CD4-positive, alpha-beta memory T cell (primary cell): ENCODE measurements at regions of chr21 and their contacts with region 1.

Region 1: DNA sequence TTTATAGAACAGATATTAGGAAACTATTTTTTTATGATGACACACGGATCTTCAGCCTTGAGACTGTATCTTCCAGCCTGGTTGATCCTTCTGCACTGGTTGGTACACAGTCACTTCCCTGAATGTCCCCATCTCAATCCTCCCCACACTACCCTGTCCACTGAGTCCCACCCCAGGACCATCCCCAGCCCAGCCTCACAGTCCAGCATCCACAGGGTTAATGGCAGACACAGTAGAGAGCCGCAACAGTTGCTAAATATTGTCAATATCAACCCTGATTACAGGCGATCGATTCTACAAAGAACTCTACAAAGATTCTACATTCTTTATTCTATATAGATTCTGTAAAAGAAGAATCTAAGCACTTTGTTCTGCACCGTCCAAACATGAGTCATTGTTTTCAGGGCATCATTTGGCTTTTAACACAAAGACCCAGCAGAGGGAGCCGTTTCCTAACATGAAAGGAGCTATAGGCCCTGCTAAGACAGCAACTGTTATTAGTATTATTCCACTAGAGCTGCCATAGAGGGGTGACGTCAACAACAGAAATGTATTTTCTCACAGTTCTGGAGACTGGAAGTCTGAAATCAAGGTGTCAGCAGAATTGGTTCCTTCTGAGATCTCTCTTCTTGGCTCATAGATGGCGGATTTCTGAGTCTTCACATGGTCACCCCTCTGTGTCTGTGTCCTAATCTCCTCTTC is 30.1 kb upstream of the IFNAR2 start:
- DNase-seq: peak; percentile 80 to 92 (median 84)
- H3K4me3 ChIP-seq: no peak overlapping the region
- H3K4me3 Mint-ChIP-seq: no peak overlapping the region
- H3K27ac ChIP-seq: no peak overlapping the region
- H3K27ac Mint-ChIP-seq: peak overlapping the region in 6 of 7 donors; percentile 65 to 88 (median 80)
- H3K4me1 ChIP-seq: peaks cover 18% of the 10 kb centered on the region
- H3K4me1 Mint-ChIP-seq: peaks cover 22 to 43% (median 32%) of the 10 kb centered on the region in 4 donors
- H3K27me3 ChIP-seq: no peaks in the 10 kb centered on the region
- H3K27me3 Mint-ChIP-seq: peaks cover 2 to 3% of the 10 kb centered on the region in 2 donors

Region 2: GRCh38 chr21:32834916-32835235 is 364.8 kb before region 1 on chr21:
- CTCF ChIA-PET with region 1: interaction called, 65 read pairs
- POLR2A ChIA-PET with region 1: no interaction called
- intact Hi-C with region 1: loop called (anchors 2 kb)
- DNase-seq: no peak
- H3K4me3 ChIP-seq: no peak overlapping the region
- H3K4me3 Mint-ChIP-seq: no peak overlapping the region
- H3K27ac ChIP-seq: no peak overlapping the region
- H3K27ac Mint-ChIP-seq: no peak overlapping the region
- H3K4me1 ChIP-seq: no peaks in the 10 kb centered on the region
- H3K4me1 Mint-ChIP-seq: no peaks in the 10 kb centered on the region
- H3K27me3 ChIP-seq: no peaks in the 10 kb centered on the region
- H3K27me3 Mint-ChIP-seq: peaks cover 2 to 3% of the 10 kb centered on the region in 2 donors

Region 3: GRCh38 chr21:32940079-32941014 is 259.3 kb before region 1 on chr21:
- CTCF ChIA-PET with region 1: interaction called, 113 read pairs
- POLR2A ChIA-PET with region 1: interaction called, 4 read pairs
- intact Hi-C with region 1: loop called (anchors 1 kb)
- DNase-seq: peak in 4 of 5 donors; percentile 46 to 55 (median 50)
- H3K4me3 ChIP-seq: no peak overlapping the region
- H3K4me3 Mint-ChIP-seq: peak overlapping the region in 1 of 8 donors; percentile 52
- H3K27ac ChIP-seq: no peak overlapping the region
- H3K27ac Mint-ChIP-seq: no peak overlapping the region
- H3K4me1 ChIP-seq: no peaks in the 10 kb centered on the region
- H3K4me1 Mint-ChIP-seq: peaks cover 0 to 6% (median 0%) of the 10 kb centered on the region in 4 donors
- H3K27me3 ChIP-seq: no peaks in the 10 kb centered on the region
- H3K27me3 Mint-ChIP-seq: peaks cover 2 to 8% of the 10 kb centered on the region in 2 donors

Region 4: GRCh38 chr21:33185852-33186251 is 13.8 kb before region 1 on chr21:
- CTCF ChIA-PET with region 1: interaction called, 35 read pairs
- POLR2A ChIA-PET with region 1: interaction called, 7 read pairs
- intact Hi-C with region 1: no loop called
- DNase-seq: peak; percentile 42 to 70 (median 56)
- H3K4me3 ChIP-seq: no peak overlapping the region
- H3K4me3 Mint-ChIP-seq: peak overlapping the region; percentile 18 to 82 (median 71)
- H3K27ac ChIP-seq: peak overlapping the region; percentile 11
- H3K27ac Mint-ChIP-seq: peak overlapping the region; percentile 76 to 93 (median 88)
- H3K4me1 ChIP-seq: peaks cover 38% of the 10 kb centered on the region
- H3K4me1 Mint-ChIP-seq: peaks cover 26 to 47% (median 30%) of the 10 kb centered on the region in 4 donors
- H3K27me3 ChIP-seq: no peaks in the 10 kb centered on the region
- H3K27me3 Mint-ChIP-seq: peaks cover 0 to 1% of the 10 kb centered on the region in 2 donors

Region 5: DNA sequence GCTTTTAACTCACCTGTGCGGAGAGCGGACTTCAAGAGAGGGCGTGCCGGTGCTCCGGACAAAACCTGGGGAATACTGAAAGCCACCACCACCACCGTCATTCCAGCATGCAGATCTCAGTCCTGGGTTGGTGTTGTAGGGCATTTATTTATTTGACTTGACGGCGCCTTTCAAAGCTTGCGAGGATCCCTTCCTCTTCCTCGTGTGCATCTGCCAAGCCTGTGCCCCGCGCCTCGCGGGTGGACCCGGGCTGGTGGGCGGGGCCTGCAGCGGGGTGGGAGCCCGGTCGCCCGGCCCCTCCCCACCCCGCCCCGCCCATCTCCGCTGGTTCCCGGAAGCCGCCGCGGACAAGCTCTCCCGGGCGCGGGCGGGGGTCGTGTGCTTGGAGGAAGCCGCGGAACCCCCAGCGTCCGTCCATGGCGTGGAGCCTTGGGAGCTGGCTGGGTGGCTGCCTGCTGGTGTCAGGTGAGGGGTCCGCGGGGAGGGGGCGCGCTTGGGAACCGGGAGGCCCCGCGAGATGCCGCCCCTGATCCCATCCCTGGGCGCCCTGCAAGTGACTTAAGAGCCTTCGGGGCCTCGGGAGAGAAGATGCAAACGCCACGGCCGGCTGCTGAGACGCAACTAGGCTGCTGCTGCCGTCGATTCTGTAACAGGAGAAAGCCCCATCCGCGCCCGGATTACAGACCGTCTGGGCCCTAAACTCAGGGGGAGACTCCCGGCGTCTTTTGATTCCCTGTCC is 66.6 kb after region 1 on chr21 and contains the start of gene IL10RB:
- CTCF ChIA-PET with region 1: interaction called, 10 read pairs
- POLR2A ChIA-PET with region 1: interaction called, 11 read pairs
- intact Hi-C with region 1: loop called (anchors 1 kb)
- DNase-seq: peak; percentile 61 to 77 (median 68)
- H3K4me3 ChIP-seq: peak within 1 kb of the TSS; percentile 54 to 79
- H3K4me3 Mint-ChIP-seq: peak within 1 kb of the TSS; percentile 93 to 99 (median 96)
- H3K27ac ChIP-seq: peak within 1 kb of the TSS; percentile 80
- H3K27ac Mint-ChIP-seq: peak within 1 kb of the TSS; percentile 92 to 97 (median 95)
- H3K4me1 ChIP-seq: peaks cover 59% of the 10 kb centered on the region
- H3K4me1 Mint-ChIP-seq: peaks cover 38 to 74% (median 50%) of the 10 kb centered on the region in 4 donors
- H3K27me3 ChIP-seq: no peaks in the 10 kb centered on the region
- H3K27me3 Mint-ChIP-seq: no peaks in the 10 kb centered on the region
- total RNA-seq, gene IL10RB: 30.6 to 36.4 TPM

Region 6: GRCh38 chr21:33332143-33332542 is 132.5 kb after region 1 on chr21:
- CTCF ChIA-PET with region 1: interaction called, 13 read pairs
- POLR2A ChIA-PET with region 1: interaction called, 3 read pairs
- intact Hi-C with region 1: no loop called
- DNase-seq: peak in 2 of 5 donors; percentile 14 to 25
- H3K4me3 ChIP-seq: no peak overlapping the region
- H3K4me3 Mint-ChIP-seq: peak overlapping the region; percentile 21 to 73 (median 37)
- H3K27ac ChIP-seq: peak overlapping the region; percentile 13
- H3K27ac Mint-ChIP-seq: peak overlapping the region; percentile 5 to 92 (median 77)
- H3K4me1 ChIP-seq: peaks cover 60% of the 10 kb centered on the region
- H3K4me1 Mint-ChIP-seq: peaks cover 41 to 70% (median 53%) of the 10 kb centered on the region in 4 donors
- H3K27me3 ChIP-seq: no peaks in the 10 kb centered on the region
- H3K27me3 Mint-ChIP-seq: no peaks in the 10 kb centered on the region

Region 7: DNA sequence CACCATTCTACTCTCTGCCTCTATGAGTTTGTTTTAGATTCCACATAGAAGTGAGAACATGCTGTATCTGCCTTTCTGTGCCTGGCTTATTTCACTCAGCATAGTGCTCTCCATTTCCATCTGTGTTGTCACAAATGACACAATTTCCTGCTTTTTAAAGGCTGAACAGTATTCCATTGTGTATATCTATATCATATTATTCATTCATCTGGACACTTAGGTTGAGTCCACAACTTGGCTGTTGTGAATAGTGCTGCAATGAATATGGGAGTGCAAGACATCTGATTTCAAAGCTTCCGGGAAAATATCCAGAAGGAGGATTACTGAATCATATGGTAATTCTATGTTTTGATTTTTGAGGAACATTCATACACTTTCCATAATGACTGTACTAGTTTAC is 408.9 kb after region 1 on chr21:
- CTCF ChIA-PET with region 1: interaction called, 4 read pairs
- POLR2A ChIA-PET with region 1: no interaction called
- intact Hi-C with region 1: loop called (anchors 2 kb)
- DNase-seq: no peak
- H3K4me3 ChIP-seq: no peak overlapping the region
- H3K4me3 Mint-ChIP-seq: no peak overlapping the region
- H3K27ac ChIP-seq: no peak overlapping the region
- H3K27ac Mint-ChIP-seq: peak overlapping the region in 2 of 7 donors; percentile 21 to 47
- H3K4me1 ChIP-seq: no peaks in the 10 kb centered on the region
- H3K4me1 Mint-ChIP-seq: peaks cover 0 to 5% (median 3%) of the 10 kb centered on the region in 4 donors
- H3K27me3 ChIP-seq: no peaks in the 10 kb centered on the region
- H3K27me3 Mint-ChIP-seq: no peaks in the 10 kb centered on the region

Region 8: DNA sequence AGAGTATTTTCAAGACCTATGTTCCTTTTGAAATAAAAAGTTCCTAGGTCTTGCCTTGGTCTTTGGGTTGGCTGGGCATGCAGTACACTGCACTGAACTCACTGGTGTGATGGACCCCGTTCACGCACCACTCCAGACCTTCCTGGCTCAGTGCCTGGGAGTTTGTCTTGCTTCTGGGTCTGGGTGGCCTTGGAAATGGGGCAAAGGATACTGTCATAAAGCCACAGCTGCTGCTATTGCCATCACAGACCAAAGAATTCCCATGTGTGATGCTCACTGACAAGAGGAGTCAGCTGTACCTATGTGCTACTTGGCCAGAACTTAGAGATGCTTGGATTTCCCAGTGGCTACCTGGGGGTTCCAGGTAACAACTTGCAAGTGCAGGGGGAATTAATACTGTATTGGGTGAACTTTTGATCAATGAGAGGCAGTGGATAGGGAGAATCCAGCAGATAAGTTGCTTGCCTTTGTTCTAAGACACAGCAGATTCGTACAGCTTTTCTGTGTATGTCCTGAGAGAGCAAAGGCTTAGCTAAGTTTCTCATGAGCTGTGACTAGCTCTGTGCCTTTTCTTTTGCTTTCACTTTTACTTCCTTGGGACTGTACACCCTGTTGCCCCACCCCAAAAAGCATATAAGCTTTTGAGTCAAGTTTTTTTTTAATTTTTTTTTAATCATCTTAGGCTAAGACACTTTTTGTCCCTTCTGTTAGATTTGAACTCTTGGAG is 1734.1 kb after region 1 on chr21:
- CTCF ChIA-PET with region 1: no interaction called
- POLR2A ChIA-PET with region 1: no interaction called
- intact Hi-C with region 1: no loop called
- DNase-seq: peak; percentile 62 to 75 (median 73)
- H3K4me3 ChIP-seq: peak overlapping the region; percentile 20 to 44
- H3K4me3 Mint-ChIP-seq: peak overlapping the region; percentile 66 to 92 (median 86)
- H3K27ac ChIP-seq: peak overlapping the region; percentile 73
- H3K27ac Mint-ChIP-seq: peak overlapping the region; percentile 94 to 99 (median 96)
- H3K4me1 ChIP-seq: peaks cover 90% of the 10 kb centered on the region
- H3K4me1 Mint-ChIP-seq: peaks cover 75 to 91% (median 82%) of the 10 kb centered on the region in 4 donors
- H3K27me3 ChIP-seq: no peaks in the 10 kb centered on the region
- H3K27me3 Mint-ChIP-seq: no peaks in the 10 kb centered on the region